ENCODE measurements at regions of chr4 and their contacts with region 1.

Region 1: DNA sequence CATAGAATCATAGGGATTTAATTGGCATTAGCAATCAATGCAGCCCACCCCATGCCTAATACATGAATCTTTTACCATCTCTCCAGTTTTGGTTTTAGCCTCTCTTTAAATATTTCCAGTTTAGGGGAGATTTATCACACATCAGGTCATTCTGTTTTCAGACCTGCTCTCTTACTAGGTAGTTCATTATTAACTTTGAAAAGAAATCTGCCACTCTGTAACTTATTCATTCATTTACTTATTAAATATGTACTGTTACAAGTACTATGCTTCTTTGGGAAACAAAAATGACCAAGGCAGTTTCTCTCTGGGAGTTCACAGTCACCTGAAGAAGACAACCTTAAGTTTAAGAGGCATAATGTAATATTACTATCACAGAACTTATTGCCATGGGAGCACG is 62.1 kb downstream of the USO1 start:
- DNase-seq: no peak
- ATAC-seq: no peak
- H3K4me3 ChIP-seq: no peak overlapping the region
- H3K27ac ChIP-seq: no peak overlapping the region
- H3K4me1 ChIP-seq: no peaks in the 10 kb centered on the region
- H3K27me3 ChIP-seq: no peaks in the 10 kb centered on the region

Region 2: DNA sequence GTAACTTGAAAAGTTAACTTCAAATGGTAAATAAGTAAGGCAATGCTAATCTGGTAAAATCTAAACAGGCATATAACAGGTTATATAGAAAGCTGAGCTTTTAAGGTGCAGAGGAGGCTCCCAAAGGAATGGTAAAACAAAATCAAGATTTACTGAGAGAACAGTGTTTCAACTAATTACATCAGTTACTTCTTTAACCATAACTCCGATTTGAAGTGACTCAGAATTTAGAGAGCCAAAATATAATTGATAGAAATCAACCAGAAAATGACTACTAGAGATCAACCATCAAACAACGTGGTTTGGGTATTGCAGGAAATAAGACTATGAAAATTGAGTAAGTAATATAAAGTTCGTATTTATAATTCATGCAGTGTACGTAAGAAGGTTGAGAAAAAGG is 120.2 kb before region 1 on chr4:
- intact Hi-C with region 1: loop called in 1 of 4 experiments (anchors 5 kb)
- DNase-seq: no peak
- ATAC-seq: no peak
- H3K4me3 ChIP-seq: no peak overlapping the region
- H3K27ac ChIP-seq: no peak overlapping the region
- H3K4me1 ChIP-seq: no peaks in the 10 kb centered on the region
- H3K27me3 ChIP-seq: no peaks in the 10 kb centered on the region

Region 3: DNA sequence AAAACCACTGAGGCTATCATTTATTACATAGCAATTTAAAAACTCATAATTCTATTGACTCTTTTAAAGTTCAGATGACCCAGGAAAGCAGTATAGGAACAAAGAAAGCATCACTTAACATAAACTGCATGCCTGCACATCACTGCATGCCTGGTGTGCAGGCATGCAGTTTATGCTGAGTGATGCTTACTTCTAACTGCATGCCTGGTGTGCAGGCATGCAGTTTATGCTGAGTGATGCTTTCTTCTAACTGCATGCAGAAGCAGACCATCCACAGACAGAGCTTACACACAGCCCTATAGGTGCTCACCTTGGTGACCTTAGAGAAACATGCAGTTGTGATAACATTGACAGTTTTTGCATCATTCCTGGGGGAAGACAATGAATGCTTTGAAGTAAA is 187.2 kb after region 1 on chr4:
- intact Hi-C with region 1: loop called in 1 of 4 experiments (anchors 10 kb)
- DNase-seq: no peak
- ATAC-seq: no peak
- H3K4me3 ChIP-seq: no peak overlapping the region
- H3K27ac ChIP-seq: no peak overlapping the region
- H3K4me1 ChIP-seq: no peaks in the 10 kb centered on the region
- H3K27me3 ChIP-seq: no peaks in the 10 kb centered on the region

Measured in right cardiac atrium (tissue), 5 donors.